ENCODE measurements at regions of chrX and their contacts with region 1.

Region 1: DNA sequence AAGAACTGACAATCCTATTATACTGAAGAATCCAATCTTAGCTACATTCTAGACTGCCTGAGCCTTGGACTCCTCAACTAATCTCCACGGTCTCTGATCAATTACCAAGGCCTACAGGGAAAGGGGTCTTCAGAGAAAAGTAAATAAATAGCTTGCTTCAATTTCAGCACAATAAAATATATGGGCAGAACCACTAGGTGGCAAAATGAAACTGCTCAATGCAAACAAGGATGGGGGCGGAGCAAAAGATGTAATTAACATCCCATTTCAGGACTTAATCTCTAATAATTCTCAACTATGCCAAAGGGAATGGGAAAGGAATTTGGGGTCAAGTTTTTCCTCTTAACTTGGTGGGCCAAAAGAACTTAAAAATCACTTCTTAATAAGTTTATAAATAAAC is 78.4 kb upstream of the MAP3K15 start:
- DNase-seq: peak; percentile 60

Region 2: DNA sequence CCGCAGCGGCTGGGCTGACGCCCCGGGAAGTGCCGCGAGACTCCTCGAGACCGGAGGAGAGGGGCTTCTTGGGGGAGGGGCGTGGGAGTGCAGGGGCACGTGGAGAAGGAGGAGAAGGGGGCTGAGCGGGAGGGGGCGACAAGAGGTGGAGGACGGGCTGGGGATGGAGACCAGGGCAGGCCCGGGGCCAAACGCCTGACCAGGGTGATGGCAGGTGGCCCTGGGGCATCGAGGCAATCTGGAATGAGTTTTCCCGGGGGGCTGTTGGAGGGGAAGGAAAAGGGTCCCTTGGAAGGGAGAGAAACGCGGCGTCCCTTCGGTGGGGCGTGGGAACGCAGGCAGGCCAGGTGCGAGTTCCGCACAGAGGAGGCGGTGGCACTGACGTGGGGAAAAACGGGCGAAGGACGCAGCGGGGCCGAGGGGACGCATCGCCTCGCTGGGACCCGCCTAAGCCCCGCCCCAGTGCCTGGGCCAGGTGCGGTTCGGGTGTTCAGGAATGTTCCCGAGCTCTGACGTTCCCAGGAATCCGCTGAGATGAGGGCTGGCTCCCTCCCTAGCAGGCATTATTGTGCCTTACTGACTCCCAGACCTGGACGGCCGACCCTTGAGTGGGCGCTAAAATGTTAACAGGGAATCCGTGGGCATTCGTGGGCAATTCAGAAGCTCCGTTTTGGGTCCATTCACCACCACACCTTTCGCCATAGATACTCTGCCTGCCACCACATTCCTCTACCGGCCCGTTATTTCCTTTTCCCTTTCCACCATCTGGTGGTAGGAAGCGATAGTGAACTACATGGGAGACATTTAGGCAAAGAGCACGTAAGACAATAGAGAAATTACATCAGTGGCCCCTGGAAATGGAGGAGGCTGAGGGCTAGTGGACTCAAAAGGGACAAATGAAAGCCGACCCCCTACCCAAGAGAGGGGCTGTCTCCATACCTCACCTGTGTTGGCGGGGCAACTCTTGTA is 294.5 kb after region 1 on chrX:
- in situ Hi-C with region 1: loop called (anchors 25 kb)
- DNase-seq: peak; percentile 90